MCF 10A (cell line): ENCODE measurements at regions of chr17 and their contacts with region 1.

Region 1: DNA sequence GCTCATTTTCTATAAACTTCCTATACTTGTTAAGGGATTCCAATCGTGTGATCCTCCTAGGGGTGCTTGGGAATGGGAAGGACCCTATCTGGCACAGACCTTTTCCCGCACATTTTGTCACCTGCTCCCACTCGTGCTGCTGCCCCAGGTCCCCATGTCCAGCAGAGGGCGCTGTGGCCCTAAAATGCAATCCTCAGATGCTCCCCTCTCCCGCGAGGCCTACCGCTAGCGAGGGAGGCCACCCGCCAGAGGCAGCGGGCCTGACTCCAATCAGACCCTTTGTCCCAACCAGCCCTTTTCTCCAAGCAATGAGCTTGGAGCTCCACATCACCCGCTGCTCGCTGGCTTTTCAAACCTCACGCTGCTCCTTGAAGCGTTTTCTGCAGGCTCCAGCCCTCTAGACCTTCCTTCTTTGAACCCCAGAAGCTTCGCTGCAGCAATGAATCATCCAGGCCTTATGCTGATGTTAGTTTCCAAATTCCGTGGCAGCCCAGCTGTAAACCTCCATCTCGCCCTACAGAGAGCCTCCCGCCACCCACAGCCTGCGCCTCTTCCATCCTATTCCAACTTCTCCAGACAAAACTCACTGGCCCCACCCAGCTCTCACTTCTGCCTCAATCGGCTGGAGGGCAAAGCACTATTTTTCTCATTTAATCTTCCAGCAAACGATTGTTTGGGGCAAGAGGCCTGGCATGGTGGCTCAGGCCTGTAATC is 23.6 kb upstream of the FZD2 start:
- DNase-seq: peak; percentile 90
- H3K4me3 Mint-ChIP-seq: no peak overlapping the region
- H3K27ac Mint-ChIP-seq: no peak overlapping the region
- H3K4me1 Mint-ChIP-seq: peaks cover 17% of the 10 kb centered on the region
- H3K27me3 Mint-ChIP-seq: no peaks in the 10 kb centered on the region
- CTCF ChIP-seq: peak; percentile 93

Region 2: DNA sequence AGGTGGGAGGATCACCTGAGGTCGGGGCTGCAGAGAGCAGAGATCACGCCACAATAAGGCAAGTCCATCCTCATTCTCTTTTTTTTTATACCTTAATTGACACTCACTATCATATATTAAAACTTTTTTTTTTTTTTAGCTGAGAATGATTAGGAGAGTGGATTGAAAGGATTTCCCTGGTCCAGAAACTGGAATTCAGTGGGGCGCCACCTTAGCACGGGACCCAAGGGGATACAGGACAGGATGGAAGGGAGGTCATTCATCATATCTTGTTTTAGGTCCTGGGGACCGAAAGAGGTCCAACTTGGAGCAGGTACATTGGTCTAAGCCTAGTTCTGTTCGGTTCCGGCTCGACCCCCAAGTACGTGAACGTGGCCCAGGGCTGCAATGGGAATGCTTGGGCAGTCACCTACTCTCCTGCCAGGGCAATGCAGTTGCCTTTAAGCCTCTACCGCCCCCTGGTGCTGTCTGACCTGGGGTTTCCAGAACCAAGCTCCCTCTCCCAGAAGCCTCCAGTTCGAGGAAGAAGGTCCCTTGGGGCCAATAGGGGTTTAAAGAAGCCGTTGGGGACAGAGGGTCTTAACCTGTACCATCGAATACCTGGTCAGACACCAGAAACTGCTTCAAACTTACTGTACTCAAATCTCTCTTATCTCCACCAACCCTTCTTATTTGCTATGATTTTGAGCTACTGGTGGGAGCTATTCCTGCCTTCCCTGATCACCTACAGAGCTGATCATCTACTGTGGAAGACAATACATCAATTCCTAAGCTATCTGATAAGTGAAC is 10.6 kb before region 1 on chr17:
- CTCF ChIA-PET with region 1: interaction called, 28 read pairs
- POLR2A ChIA-PET with region 1: no interaction called
- intact Hi-C with region 1: no loop called
- DNase-seq: peak; percentile 76
- H3K4me3 Mint-ChIP-seq: no peak overlapping the region
- H3K27ac Mint-ChIP-seq: no peak overlapping the region
- H3K4me1 Mint-ChIP-seq: peaks cover 2% of the 10 kb centered on the region
- H3K27me3 Mint-ChIP-seq: no peaks in the 10 kb centered on the region
- CTCF ChIP-seq: peak; percentile 57

Region 3: GRCh38 chr17:44568945-44569858 is 35.5 kb after region 1 on chr17:
- CTCF ChIA-PET with region 1: interaction called, 19 read pairs
- POLR2A ChIA-PET with region 1: no interaction called
- intact Hi-C with region 1: no loop called
- DNase-seq: peak; percentile 11
- H3K4me3 Mint-ChIP-seq: no peak overlapping the region
- H3K27ac Mint-ChIP-seq: no peak overlapping the region
- H3K4me1 Mint-ChIP-seq: no peaks in the 10 kb centered on the region
- H3K27me3 Mint-ChIP-seq: no peaks in the 10 kb centered on the region
- CTCF ChIP-seq: no peak

Region 4: GRCh38 chr17:44587339-44587738 is 53.6 kb after region 1 on chr17:
- CTCF ChIA-PET with region 1: interaction called, 10 read pairs
- POLR2A ChIA-PET with region 1: no interaction called
- intact Hi-C with region 1: no loop called
- DNase-seq: peak; percentile 72
- H3K4me3 Mint-ChIP-seq: no peak overlapping the region
- H3K27ac Mint-ChIP-seq: no peak overlapping the region
- H3K4me1 Mint-ChIP-seq: peaks cover 15% of the 10 kb centered on the region
- H3K27me3 Mint-ChIP-seq: peaks cover 4% of the 10 kb centered on the region
- CTCF ChIP-seq: no peak

Region 5: GRCh38 chr17:44636562-44636961 is 102.9 kb after region 1 on chr17:
- CTCF ChIA-PET with region 1: interaction called, 65 read pairs
- POLR2A ChIA-PET with region 1: interaction called, 4 read pairs
- intact Hi-C with region 1: loop called (anchors 1 kb)
- DNase-seq: peak; percentile 54
- H3K4me3 Mint-ChIP-seq: no peak overlapping the region
- H3K27ac Mint-ChIP-seq: no peak overlapping the region
- H3K4me1 Mint-ChIP-seq: no peaks in the 10 kb centered on the region
- H3K27me3 Mint-ChIP-seq: no peaks in the 10 kb centered on the region
- CTCF ChIP-seq: peak; percentile 56

Region 6: GRCh38 chr17:44672479-44673093 is 138.9 kb after region 1 on chr17:
- CTCF ChIA-PET with region 1: interaction called, 23 read pairs
- POLR2A ChIA-PET with region 1: no interaction called
- intact Hi-C with region 1: loop called (anchors 1 kb)
- DNase-seq: peak; percentile 34
- H3K4me3 Mint-ChIP-seq: no peak overlapping the region
- H3K27ac Mint-ChIP-seq: no peak overlapping the region
- H3K4me1 Mint-ChIP-seq: no peaks in the 10 kb centered on the region
- H3K27me3 Mint-ChIP-seq: no peaks in the 10 kb centered on the region
- CTCF ChIP-seq: peak; percentile 35